WTC11 (cell line): ENCODE measurements at regions of chr3 and their contacts with region 1.

Region 1: GRCh38 chr3:194671900-194672808 is at the start of gene LSG1:
- DNase-seq: peak; percentile 87
- ATAC-seq: peak; percentile 98
- H3K4me3 Mint-ChIP-seq: peak within 1 kb of the TSS; percentile 100
- H3K27ac Mint-ChIP-seq: peak within 1 kb of the TSS; percentile 98
- H3K4me1 Mint-ChIP-seq: peaks cover 9% of the 10 kb centered on the region
- H3K27me3 Mint-ChIP-seq: peaks cover 24% of the 10 kb centered on the region
- CTCF ChIP-seq: peak; percentile 9; the same call in 1 of the 2 replicates
- total RNA-seq, gene LSG1: 42.9 to 45.8 TPM (median 44.1 TPM) in 3 replicates

Region 2: GRCh38 chr3:194632809-194633348 is 39.3 kb before region 1 on chr3:
- CTCF ChIA-PET with region 1: interaction called, 14 read pairs
- POLR2A ChIA-PET with region 1: interaction called, 3 read pairs
- DNase-seq: no peak
- ATAC-seq: no peak; the same call in 1 of the 2 replicates
- H3K4me3 Mint-ChIP-seq: peak overlapping the region; percentile 74
- H3K27ac Mint-ChIP-seq: no peak overlapping the region
- H3K4me1 Mint-ChIP-seq: no peaks in the 10 kb centered on the region
- H3K27me3 Mint-ChIP-seq: no peaks in the 10 kb centered on the region
- CTCF ChIP-seq: no peak

Region 3: DNA sequence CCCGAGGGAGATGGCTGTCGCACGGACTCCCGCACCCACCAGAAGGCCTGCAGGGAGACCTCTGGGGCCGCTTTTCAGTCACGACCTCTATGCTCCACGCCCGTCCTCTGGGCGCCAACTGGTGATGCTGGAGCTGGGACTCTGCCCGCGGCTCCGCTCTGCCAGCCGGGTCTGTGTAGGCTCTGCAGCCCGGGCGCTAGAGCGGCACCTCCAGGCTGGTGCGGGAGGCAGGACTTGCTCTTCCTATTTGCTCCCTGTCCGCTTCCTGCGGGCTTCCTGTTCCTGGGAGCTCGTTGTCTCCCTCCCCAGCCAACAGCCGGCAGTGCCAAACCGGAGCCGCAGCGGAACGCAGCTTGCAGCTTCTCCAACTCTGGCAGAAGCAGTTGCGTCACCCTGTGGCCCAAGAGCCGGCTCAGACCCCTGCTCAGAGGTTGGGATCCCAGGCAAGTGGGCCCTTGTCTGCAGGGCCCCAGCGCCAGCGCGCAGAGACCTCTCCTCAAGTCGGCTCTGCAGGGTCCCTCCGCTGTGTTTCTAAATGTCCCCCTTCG is 313.0 kb after region 1 on chr3:
- CTCF ChIA-PET with region 1: interaction called, 13 read pairs
- POLR2A ChIA-PET with region 1: no interaction called
- DNase-seq: peak; percentile 83
- ATAC-seq: peak; percentile 98
- H3K4me3 Mint-ChIP-seq: peak overlapping the region; percentile 46
- H3K27ac Mint-ChIP-seq: no peak overlapping the region
- H3K4me1 Mint-ChIP-seq: peaks cover 4% of the 10 kb centered on the region; the same call in 1 of the 2 replicates
- H3K27me3 Mint-ChIP-seq: peaks cover 14% of the 10 kb centered on the region
- CTCF ChIP-seq: no peak

Region 4: DNA sequence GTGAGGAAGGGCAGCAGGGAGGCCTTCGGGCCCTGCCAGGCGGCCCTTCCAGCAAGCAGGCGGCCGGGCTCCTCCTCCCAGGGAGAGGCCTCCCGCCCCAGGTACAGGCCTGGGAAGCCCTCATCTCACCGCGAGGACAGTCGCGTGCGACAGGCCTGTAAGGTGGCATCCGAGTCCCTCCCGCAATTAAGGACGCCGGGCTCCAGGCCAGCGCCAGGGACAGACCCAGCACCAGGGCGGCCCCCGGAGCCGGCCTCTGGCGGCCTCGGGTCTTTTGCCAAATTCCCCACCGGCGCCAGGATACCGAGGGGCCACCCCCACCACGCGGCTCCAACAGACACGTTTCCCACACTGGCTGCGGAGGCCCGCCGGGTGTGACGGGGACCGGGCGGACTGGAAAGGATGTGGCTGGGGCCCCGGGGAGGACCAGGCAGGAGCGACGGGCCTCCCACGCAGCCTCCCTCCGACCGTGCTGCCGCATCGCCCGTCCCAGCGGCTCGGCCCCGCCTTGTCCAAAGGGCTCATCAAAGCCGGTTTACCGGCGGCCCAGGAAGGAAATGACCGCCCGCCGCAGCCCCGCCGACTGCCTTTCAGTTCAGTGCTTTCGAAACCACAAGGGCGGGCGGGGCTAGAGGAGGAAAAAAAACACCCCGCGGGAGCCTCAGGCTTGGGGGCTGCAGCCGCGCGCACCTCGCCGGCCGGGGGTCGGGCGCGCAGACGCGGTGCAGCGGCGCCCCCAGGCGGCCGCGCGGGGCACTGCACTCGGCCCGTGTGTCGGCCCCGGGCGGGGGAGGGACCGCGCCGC is 587.5 kb after region 1 on chr3:
- CTCF ChIA-PET with region 1: interaction called, 10 read pairs
- POLR2A ChIA-PET with region 1: no interaction called
- DNase-seq: peak; percentile 88
- ATAC-seq: peak; percentile 66
- H3K4me3 Mint-ChIP-seq: peak overlapping the region; percentile 58
- H3K27ac Mint-ChIP-seq: no peak overlapping the region
- H3K4me1 Mint-ChIP-seq: peaks cover 46% of the 10 kb centered on the region
- H3K27me3 Mint-ChIP-seq: no peaks in the 10 kb centered on the region
- CTCF ChIP-seq: peak; percentile 85